ENCODE measurements at regions of chr10 and their contacts with region 1.

Region 1: DNA sequence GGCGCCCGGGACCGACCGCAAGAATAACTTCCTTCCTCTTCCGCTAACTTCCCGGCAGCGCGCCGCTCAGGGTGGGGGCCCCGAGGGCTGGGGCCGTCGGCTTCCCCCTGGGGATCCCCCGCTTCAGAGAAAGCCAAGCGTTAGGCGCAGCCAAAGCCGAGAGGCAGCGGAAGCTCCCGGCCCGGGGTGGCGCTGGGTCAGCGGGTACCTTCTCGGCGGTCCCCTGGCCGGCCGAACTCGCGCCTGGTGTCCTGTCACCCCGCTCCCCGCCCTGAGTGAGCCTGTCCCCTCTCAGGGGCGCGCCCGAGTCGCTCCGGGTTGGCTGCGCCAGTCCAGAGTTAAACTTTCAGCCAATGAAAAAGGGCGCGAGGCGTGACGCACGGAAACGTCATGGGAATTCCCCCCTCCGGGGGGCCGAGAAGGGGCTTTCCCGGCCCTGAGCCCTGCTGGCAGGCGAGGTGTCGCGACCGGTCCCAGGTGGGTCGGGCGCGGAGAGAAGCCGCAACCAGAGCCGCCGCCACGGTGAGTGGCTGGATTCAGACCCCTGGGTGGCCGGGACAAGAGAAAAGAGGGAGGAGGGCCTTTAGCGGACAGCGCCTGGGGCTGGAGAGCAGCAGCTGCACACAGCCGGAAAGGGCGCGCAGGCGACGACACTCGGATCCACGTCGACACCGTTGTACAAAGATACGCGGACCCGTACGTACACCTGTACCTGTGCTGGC is 1.3 kb upstream of the NFKB2 start:
- DNase-seq: peak; percentile 99
- ATAC-seq: peak; percentile 79
- H3K4me3 Mint-ChIP-seq: peak overlapping the region; percentile 94
- H3K27ac Mint-ChIP-seq: peak overlapping the region; percentile 97
- H3K4me1 Mint-ChIP-seq: peaks cover 46% of the 10 kb centered on the region
- H3K27me3 Mint-ChIP-seq: no peaks in the 10 kb centered on the region
- CTCF ChIP-seq: no peak

Region 2: GRCh38 chr10:102114861-102115618 is 279.2 kb before region 1 on chr10:
- CTCF ChIA-PET with region 1: no interaction called
- POLR2A ChIA-PET with region 1: interaction called, 11 read pairs
- intact Hi-C with region 1: no loop called
- DNase-seq: peak; percentile 70
- ATAC-seq: peak; percentile 78
- H3K4me3 Mint-ChIP-seq: peak overlapping the region; percentile 91
- H3K27ac Mint-ChIP-seq: peak overlapping the region; percentile 94
- H3K4me1 Mint-ChIP-seq: peaks cover 62% of the 10 kb centered on the region
- H3K27me3 Mint-ChIP-seq: no peaks in the 10 kb centered on the region
- CTCF ChIP-seq: no peak

Region 3: GRCh38 chr10:102225646-102226541 is 168.3 kb before region 1 on chr10 and contains the start of gene ELOVL3:
- CTCF ChIA-PET with region 1: interaction called, 12 read pairs
- POLR2A ChIA-PET with region 1: interaction called, 33 read pairs
- intact Hi-C with region 1: loop called (anchors 1 kb)
- DNase-seq: peak; percentile 69
- ATAC-seq: peak; percentile 94
- H3K4me3 Mint-ChIP-seq: peak within 1 kb of the TSS; percentile 71
- H3K27ac Mint-ChIP-seq: no peak within 1 kb of the TSS
- H3K4me1 Mint-ChIP-seq: peaks cover 19% of the 10 kb centered on the region
- H3K27me3 Mint-ChIP-seq: peaks cover 59% of the 10 kb centered on the region
- CTCF ChIP-seq: no peak
- total RNA-seq, gene ELOVL3: not detected in 2 replicates

Region 4: GRCh38 chr10:102408728-102409603 is 14.7 kb after region 1 on chr10:
- CTCF ChIA-PET with region 1: interaction called, 20 read pairs
- POLR2A ChIA-PET with region 1: interaction called, 179 read pairs
- intact Hi-C with region 1: no loop called
- DNase-seq: peak; percentile 36
- ATAC-seq: peak; percentile 45
- H3K4me3 Mint-ChIP-seq: peak overlapping the region; percentile 59
- H3K27ac Mint-ChIP-seq: no peak overlapping the region
- H3K4me1 Mint-ChIP-seq: peaks cover 40% of the 10 kb centered on the region
- H3K27me3 Mint-ChIP-seq: peaks cover 42% of the 10 kb centered on the region
- CTCF ChIP-seq: no peak

Region 5: DNA sequence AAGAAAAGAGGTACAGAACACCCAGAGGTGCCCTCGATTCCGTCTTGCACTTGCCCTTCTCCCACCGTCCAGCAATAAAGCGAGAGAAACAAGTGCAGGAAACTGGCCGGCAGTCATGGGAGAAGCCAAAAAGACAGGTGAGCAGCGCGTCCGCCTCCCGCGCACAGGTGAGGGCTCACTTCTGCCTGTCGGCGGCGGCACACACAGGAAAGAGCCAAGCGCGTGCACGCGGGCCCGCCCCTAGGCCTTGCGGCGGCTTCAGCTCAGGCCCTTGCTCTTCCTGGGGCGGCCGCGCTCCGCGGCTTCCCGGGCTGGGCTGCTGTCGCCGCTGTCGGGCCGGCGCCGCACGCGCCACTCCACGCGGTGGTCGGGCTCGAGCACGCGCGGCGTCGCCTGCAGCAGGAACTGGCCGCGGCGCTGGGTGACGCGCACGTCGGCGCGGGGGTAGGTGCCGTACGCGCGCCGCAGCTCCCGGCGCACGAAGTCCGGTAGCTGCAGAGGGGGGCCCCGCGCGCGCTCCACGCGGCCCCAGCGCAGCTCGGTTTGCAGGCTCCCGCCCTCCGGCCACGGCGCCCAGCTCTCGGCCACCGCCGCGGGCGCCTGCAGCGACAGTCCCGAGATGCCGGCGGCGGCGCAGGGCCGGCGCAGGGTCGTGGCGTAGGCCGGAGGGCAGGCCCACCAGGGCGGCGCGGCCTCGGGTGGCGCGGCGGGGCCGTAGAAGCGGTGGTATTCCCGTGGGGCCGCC is 56.1 kb after region 1 on chr10:
- CTCF ChIA-PET with region 1: interaction called, 5 read pairs
- POLR2A ChIA-PET with region 1: interaction called, 104 read pairs
- intact Hi-C with region 1: loop called (anchors 1 kb)
- DNase-seq: peak; percentile 84
- ATAC-seq: peak; percentile 82
- H3K4me3 Mint-ChIP-seq: peak overlapping the region; percentile 92
- H3K27ac Mint-ChIP-seq: peak overlapping the region; percentile 94
- H3K4me1 Mint-ChIP-seq: peaks cover 24% of the 10 kb centered on the region
- H3K27me3 Mint-ChIP-seq: no peaks in the 10 kb centered on the region
- CTCF ChIP-seq: no peak

Region 6: GRCh38 chr10:102511583-102512274 is 117.5 kb after region 1 on chr10:
- CTCF ChIA-PET with region 1: no interaction called
- POLR2A ChIA-PET with region 1: interaction called, 17 read pairs
- intact Hi-C with region 1: no loop called
- DNase-seq: no peak
- ATAC-seq: peak; percentile 99
- H3K4me3 Mint-ChIP-seq: peak overlapping the region; percentile 42
- H3K27ac Mint-ChIP-seq: peak overlapping the region; percentile 86
- H3K4me1 Mint-ChIP-seq: peaks cover 16% of the 10 kb centered on the region
- H3K27me3 Mint-ChIP-seq: no peaks in the 10 kb centered on the region
- CTCF ChIP-seq: no peak

Region 7: DNA sequence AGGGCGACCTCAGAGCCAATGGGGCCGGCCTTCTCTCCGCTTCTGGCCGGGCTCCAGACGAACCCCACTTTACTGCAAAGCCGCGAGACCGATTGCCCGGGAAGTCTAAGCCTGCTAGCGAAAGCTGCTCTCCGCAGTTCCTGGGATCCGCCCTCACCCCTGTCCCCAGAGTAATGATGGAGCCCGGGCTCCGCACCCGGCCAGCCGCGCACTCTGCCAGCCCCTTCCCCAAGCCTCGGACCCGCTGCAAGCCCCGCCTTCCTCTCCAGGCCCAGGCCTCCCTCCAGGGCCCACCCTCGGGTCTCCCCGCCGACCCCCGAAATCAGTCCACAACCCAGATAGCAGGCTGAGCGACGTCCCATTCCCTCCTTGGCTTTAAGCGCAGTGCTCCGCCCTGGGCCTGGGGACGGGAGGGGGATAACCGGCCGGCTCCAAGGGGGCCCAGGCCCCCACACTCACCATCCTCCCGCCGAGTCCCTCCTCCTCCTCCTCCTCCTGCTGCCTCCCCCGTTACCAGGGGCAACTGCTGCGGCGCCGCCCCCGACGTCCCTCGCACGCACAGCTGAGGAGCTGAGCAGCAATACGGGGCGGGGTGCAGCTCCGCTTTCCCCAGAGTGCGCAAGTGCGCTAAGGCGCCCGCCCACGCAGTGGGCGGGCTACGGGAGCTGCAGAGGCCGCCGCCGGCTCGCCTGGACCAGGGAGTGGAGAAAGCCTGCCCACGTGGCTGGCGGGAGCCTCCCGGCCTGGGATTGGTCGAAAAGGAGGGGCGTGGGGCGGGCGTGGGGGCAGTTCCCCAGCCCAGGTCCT is 319.8 kb after region 1 on chr10 and contains the start of gene ARL3:
- CTCF ChIA-PET with region 1: no interaction called
- POLR2A ChIA-PET with region 1: interaction called, 15 read pairs
- intact Hi-C with region 1: loop called (anchors 1 kb)
- DNase-seq: peak; percentile 89
- ATAC-seq: peak; percentile 85
- H3K4me3 Mint-ChIP-seq: peak within 1 kb of the TSS; percentile 95
- H3K27ac Mint-ChIP-seq: peak within 1 kb of the TSS; percentile 92
- H3K4me1 Mint-ChIP-seq: peaks cover 44% of the 10 kb centered on the region
- H3K27me3 Mint-ChIP-seq: no peaks in the 10 kb centered on the region
- CTCF ChIP-seq: no peak
- total RNA-seq, gene ARL3: 4.1 and 5.1 TPM in 2 replicates